Left colon (tissue), 2 donors: ENCODE measurements at regions of chr4 and their contacts with region 1.

Region 1: DNA sequence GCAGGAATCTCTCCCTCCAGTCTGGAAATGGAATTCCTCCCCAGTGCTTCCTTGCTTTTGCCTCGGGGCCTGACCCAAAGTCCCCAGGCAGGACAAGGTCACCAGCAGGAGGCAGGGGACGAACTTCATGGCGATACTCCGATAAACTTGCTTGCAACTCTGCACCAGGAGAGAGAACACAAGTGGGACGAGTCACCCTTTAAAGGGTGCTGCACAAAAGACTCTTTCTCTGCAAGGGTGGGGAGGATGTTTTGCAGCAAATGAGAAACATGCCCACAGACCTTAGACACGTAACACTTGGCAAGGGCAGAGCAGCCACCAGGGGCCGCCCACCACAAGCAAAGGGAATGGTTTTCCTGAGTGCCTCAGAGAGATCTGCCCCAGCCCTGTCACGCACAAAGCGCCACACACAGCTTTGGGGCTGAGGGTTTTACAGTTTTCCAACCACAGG is at the start of gene FGFBP2:
- DNase-seq: peak; percentile 49 to 79
- ATAC-seq: peak; percentile 93
- total RNA-seq, gene FGFBP2: 0.49 to 0.75 TPM

Region 2: GRCh38 chr4:15238720-15239119 is 724.3 kb before region 1 on chr4:
- intact Hi-C with region 1: no loop called
- DNase-seq: no peak
- ATAC-seq: peak; percentile 67

Region 3: DNA sequence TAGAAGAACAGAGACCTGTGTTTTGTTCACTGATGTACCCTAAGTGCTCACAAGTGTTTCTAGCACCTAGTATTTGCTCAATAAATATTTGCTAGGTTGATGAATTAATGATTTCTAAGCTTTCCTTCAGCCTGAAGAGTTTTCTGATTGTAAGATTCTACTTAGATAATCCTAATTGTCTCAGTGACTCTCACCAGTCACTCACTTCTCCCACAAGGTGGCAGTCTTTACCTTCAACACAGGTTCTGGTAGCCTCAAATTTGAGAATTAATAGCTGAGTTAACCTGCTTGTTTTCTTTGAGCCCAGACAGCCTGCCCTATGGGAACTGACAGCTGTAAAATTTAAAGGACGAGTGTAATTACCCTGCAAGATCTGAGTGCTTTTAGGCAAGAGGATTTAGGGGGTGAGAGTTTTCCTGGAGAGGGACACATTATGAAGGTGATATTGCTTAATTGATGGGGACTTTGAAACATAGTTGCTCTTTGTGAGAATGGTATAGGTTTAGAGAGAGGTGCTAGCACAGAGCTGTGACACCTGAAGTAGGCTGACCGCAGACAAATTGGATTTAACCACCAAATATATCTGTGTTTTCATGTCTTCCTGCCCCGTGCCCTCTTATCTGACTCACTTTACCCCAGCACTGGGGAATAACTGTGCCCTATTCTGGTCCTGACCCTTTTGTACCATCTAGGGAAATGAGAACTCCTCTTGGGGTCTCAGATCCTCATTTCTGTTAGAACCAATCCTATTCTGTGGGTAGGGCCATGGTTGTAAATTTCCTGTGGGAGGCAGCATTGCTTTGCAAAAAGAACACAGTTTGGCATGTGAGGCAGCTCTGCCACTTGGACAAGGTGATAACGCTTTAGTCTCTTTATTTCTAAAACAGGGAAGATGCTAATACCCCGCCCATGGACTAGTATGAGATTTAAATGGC is 157.2 kb before region 1 on chr4:
- intact Hi-C with region 1: loop called in 1 of 2 experiments (anchors 10 kb)
- DNase-seq: no peak
- ATAC-seq: peak; percentile 76

Region 4: GRCh38 chr4:16169490-16169889 is 206.5 kb after region 1 on chr4:
- intact Hi-C with region 1: no loop called
- DNase-seq: no peak
- ATAC-seq: peak; percentile 48

Region 5: GRCh38 chr4:16582532-16582931 is 619.5 kb after region 1 on chr4:
- intact Hi-C with region 1: no loop called
- DNase-seq: no peak
- ATAC-seq: no peak